Activated CD4-positive, alpha-beta memory T cell treated with anti-CD3 and anti-CD28 coated beads for 36 hours (primary cell): ENCODE measurements at regions of chr6 and their contacts with region 1.

Region 1: GRCh38 chr6:158649289-158650143 is at the start of gene SYTL3:
- DNase-seq: peak; percentile 93
- H3K4me3 Mint-ChIP-seq: peak within 1 kb of the TSS; percentile 79
- H3K27ac Mint-ChIP-seq: peak within 1 kb of the TSS; percentile 99
- H3K4me1 Mint-ChIP-seq: peaks cover 77% of the 10 kb centered on the region
- H3K27me3 Mint-ChIP-seq: no peaks in the 10 kb centered on the region
- total RNA-seq, gene SYTL3: 181 to 186 TPM

Region 2: GRCh38 chr6:158207422-158207788 is 442.1 kb before region 1 on chr6:
- CTCF ChIA-PET with region 1: interaction called, 3 read pairs
- POLR2A ChIA-PET with region 1: interaction called, 4 read pairs
- intact Hi-C with region 1: loop called (anchors 2 kb)
- DNase-seq: peak; percentile 59
- H3K4me3 Mint-ChIP-seq: peak overlapping the region; percentile 30
- H3K27ac Mint-ChIP-seq: peak overlapping the region; percentile 87
- H3K4me1 Mint-ChIP-seq: peaks cover 30% of the 10 kb centered on the region
- H3K27me3 Mint-ChIP-seq: no peaks in the 10 kb centered on the region

Region 3: DNA sequence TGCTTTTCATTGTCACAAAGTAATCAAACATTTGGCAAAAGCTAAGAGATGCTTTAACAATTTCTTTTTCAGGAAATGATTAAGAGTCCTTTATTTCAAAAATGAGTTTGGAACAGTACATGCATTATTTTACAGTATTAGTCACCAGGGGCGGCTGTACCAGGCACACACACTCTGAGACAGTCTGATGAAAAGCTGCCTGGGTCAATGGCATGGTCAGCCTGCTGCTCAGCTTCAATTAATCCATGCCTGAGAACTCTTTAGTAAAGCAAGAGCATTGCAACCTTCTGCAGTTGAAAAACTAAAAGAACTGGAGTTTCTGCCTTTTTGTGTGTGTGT is 231.8 kb before region 1 on chr6:
- CTCF ChIA-PET with region 1: no interaction called
- POLR2A ChIA-PET with region 1: no interaction called
- intact Hi-C with region 1: no loop called
- DNase-seq: no peak
- H3K4me3 Mint-ChIP-seq: no peak overlapping the region
- H3K27ac Mint-ChIP-seq: no peak overlapping the region
- H3K4me1 Mint-ChIP-seq: no peaks in the 10 kb centered on the region
- H3K27me3 Mint-ChIP-seq: no peaks in the 10 kb centered on the region

Region 4: GRCh38 chr6:158571826-158572652 is 77.5 kb before region 1 on chr6:
- CTCF ChIA-PET with region 1: no interaction called
- POLR2A ChIA-PET with region 1: interaction called, 7 read pairs
- intact Hi-C with region 1: loop called (anchors 2 kb)
- DNase-seq: no peak
- H3K4me3 Mint-ChIP-seq: no peak overlapping the region
- H3K27ac Mint-ChIP-seq: no peak overlapping the region
- H3K4me1 Mint-ChIP-seq: peaks cover 62% of the 10 kb centered on the region
- H3K27me3 Mint-ChIP-seq: no peaks in the 10 kb centered on the region

Region 5: DNA sequence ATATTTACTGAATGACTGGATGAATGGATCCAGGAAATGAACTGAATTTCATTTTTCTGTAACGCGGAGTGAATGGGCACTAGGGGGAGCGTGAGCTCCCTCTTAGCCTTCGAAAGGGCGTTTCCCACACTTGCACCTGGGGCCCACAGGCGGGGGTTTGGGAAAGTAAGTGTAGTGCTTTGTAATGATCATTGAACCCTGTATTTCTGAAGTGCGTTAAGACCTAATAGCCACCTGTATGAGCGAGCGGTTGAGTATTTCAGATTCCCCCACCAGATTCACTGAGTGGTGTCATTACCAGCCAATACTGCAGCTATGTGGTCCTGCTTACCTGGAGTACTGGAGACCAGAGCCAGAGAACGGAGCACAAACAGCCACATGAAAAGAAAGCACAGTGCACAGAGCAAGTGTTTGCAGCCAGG is 10.8 kb after region 1 on chr6:
- CTCF ChIA-PET with region 1: interaction called, 21 read pairs
- POLR2A ChIA-PET with region 1: interaction called, 99 read pairs
- intact Hi-C with region 1: no loop called
- DNase-seq: peak; percentile 56
- H3K4me3 Mint-ChIP-seq: no peak overlapping the region
- H3K27ac Mint-ChIP-seq: no peak overlapping the region
- H3K4me1 Mint-ChIP-seq: peaks cover 35% of the 10 kb centered on the region
- H3K27me3 Mint-ChIP-seq: no peaks in the 10 kb centered on the region

Region 6: DNA sequence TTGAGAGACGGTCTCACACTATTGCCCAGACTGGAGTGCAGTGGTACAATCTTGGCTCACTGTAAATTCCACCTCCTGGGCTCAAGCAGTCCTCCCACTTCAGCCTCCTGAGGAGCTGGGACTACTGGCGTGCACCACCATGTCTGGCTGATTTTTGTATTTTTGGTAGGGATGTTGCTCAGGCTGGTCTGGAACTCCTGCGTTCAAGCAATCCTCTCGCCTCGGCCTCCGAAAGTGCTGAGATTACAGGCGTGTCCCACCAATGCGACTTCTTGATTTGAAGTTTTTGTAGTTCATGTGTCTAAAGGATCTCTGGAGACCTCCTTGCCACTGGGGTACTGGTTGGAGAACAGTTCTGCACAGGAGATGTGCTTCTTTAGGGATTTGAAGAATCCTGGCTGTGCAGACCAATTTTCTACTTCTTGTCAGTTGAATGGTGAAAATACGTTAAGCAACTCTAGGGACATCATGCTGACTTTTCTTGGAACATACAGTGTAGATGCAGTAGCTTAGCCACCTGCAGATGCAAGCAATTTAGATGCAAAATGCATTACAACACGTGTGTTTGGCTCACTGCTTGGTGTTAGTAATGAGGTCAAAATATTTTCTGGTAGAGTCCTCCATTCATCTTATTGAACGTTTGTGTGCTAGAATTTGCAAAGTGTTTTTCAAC is 28.5 kb after region 1 on chr6:
- CTCF ChIA-PET with region 1: no interaction called
- POLR2A ChIA-PET with region 1: no interaction called
- intact Hi-C with region 1: no loop called
- DNase-seq: no peak
- H3K4me3 Mint-ChIP-seq: no peak overlapping the region
- H3K27ac Mint-ChIP-seq: no peak overlapping the region
- H3K4me1 Mint-ChIP-seq: peaks cover 14% of the 10 kb centered on the region
- H3K27me3 Mint-ChIP-seq: no peaks in the 10 kb centered on the region

Region 7: DNA sequence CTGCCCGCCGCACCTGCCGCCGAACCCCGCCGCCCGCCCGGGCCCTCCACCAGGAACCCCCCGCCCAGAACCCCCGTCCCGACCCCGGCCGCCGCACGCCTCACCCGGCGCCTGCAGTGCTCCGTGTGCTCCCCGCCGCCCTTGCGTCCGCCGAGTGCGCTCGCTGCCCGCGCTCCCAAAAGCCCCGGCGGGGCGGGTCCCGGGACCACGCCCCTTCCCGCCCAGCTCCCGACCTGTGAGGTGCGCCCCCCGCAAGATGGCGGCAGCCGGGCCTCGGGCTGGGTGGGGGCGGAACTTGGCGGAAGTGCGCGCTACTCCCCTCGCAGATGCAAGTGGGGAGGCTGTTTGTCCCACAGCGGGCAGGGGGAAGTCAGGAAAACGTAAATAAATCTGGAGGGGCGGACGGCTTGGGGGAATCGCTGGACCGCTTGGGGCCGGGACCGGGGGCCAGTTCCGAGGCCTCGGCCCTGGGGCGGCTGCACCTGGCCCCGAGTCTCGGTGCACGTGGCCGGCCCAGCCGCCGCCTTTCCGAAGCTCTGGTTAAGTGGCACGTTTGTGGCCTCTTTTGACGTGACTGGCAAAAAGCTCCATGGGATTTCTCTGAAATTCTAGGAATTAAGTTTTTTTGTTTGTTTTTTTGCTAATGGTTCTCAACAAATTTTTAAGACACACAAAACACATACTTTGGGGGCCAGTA is 169.8 kb after region 1 on chr6 and contains the start of gene EZR:
- CTCF ChIA-PET with region 1: no interaction called
- POLR2A ChIA-PET with region 1: interaction called, 8 read pairs
- intact Hi-C with region 1: loop called (anchors 1 kb)
- DNase-seq: peak; percentile 91
- H3K4me3 Mint-ChIP-seq: peak within 1 kb of the TSS; percentile 100
- H3K27ac Mint-ChIP-seq: peak within 1 kb of the TSS; percentile 99
- H3K4me1 Mint-ChIP-seq: peaks cover 43% of the 10 kb centered on the region
- H3K27me3 Mint-ChIP-seq: no peaks in the 10 kb centered on the region
- total RNA-seq, gene EZR: 255 to 256 TPM

Region 8: DNA sequence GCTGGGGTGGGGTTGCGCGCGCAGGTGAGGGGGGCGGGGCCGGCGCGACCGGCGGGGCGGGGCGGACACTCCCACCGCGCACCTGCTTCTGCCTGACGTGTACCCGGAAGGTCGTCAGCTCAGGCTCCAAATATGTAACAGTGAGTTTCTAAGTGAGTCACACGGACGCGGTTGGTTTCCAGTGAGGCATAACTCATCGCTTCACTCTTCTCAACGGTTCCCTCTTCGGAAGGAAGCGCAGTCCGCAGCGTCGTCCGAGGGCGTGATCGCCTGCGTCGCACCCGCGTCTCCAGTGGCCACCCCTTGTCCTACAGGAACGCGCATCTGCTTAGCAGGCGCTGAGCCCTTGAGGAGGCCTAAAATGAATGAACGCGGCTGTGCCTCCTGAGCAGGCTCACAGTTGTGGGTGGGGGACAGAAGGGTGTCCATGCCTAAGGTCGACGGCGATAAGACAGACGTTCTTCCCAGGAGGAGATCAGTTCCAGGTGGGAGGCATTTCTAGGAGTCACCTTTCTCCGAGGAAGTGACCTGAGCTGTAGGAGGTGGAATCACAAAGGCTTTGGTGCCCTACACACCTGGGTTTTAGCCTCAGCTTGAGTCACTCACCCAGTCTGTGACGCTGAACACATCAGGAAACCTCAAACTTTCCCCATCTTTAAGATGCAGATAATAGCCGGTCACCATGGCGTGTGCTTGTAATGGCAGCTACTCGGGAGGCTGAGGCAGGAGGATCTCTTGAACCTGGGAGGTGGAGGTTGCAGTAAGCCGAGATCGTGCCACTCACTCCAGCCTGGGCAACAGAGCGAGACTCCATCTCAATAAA is 220.5 kb after region 1 on chr6:
- CTCF ChIA-PET with region 1: interaction called, 3 read pairs
- POLR2A ChIA-PET with region 1: interaction called, 12 read pairs
- intact Hi-C with region 1: loop called (anchors 1 kb)
- DNase-seq: peak; percentile 97
- H3K4me3 Mint-ChIP-seq: peak overlapping the region; percentile 82
- H3K27ac Mint-ChIP-seq: peak overlapping the region; percentile 98
- H3K4me1 Mint-ChIP-seq: peaks cover 34% of the 10 kb centered on the region
- H3K27me3 Mint-ChIP-seq: peaks cover 1% of the 10 kb centered on the region